ENCODE measurements at regions of chr9 and their contacts with region 1.

Region 1: GRCh38 chr9:111926421-111926875 is 29.8 kb downstream of the UGCG start:
- DNase-seq: peak; percentile 86
- ATAC-seq: peak; percentile 99
- H3K4me3 ChIP-seq: no peak overlapping the region
- H3K4me3 Mint-ChIP-seq: peak overlapping the region; percentile 33
- H3K27ac ChIP-seq: peak overlapping the region; percentile 25 to 72
- H3K27ac Mint-ChIP-seq: peak overlapping the region; percentile 90
- H3K4me1 ChIP-seq: peaks cover 22 to 32% of the 10 kb centered on the region in 2 donors
- H3K4me1 Mint-ChIP-seq: peaks cover 39% of the 10 kb centered on the region
- H3K27me3 ChIP-seq: no peaks in the 10 kb centered on the region
- H3K27me3 Mint-ChIP-seq: no peaks in the 10 kb centered on the region
- CTCF ChIP-seq: no peak

Region 2: GRCh38 chr9:111916234-111916645 is 10.2 kb before region 1 on chr9:
- CTCF ChIA-PET with region 1: interaction called, 9 read pairs
- POLR2A ChIA-PET with region 1: no interaction called
- intact Hi-C with region 1: loop called (anchors 1 kb)
- DNase-seq: peak; percentile 35
- ATAC-seq: peak; percentile 12
- H3K4me3 ChIP-seq: no peak overlapping the region
- H3K4me3 Mint-ChIP-seq: peak overlapping the region; percentile 69
- H3K27ac ChIP-seq: peak overlapping the region; percentile 35 to 79
- H3K27ac Mint-ChIP-seq: peak overlapping the region; percentile 86
- H3K4me1 ChIP-seq: peaks cover 53 to 66% of the 10 kb centered on the region in 2 donors
- H3K4me1 Mint-ChIP-seq: peaks cover 72% of the 10 kb centered on the region
- H3K27me3 ChIP-seq: no peaks in the 10 kb centered on the region
- H3K27me3 Mint-ChIP-seq: no peaks in the 10 kb centered on the region
- CTCF ChIP-seq: no peak

Region 3: DNA sequence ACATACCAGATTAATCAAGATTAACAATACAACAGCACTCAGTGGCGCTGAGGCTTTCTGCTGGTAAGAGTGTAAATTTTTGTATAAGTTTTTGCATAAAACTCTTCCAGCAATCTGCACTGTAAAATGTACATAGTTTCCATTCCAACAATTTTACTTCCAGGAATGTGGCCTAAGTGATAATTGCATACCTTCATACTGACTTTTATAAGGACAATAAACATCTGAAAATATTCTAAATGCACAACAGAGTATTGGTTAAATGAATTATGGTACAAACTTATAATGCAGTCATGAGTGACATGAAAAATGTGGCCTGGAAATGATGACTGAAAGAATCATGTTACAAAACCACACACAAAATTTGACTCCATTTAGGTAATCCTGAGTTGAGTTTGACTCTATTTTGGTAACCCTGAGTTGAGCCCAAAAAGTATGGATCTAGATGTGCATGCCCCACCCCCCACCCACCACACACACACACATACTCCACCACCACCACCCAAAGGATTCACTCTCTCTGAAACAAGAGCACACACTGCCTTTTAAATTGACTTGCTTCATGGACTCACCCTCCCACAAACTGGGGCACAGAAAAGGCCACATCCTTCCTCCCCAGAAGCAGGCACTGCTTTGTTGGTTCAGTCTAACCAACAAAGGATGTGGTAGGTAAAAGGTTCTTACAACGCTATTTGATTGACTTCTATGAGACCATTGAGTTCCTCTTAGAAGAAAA is 111.0 kb after region 1 on chr9:
- CTCF ChIA-PET with region 1: interaction called, 4 read pairs
- POLR2A ChIA-PET with region 1: interaction called, 4 read pairs
- intact Hi-C with region 1: loop called (anchors 2 kb)
- DNase-seq: peak; percentile 84
- ATAC-seq: peak; percentile 68
- H3K4me3 ChIP-seq: peak overlapping the region in 1 of 5 experiments; percentile 18
- H3K4me3 Mint-ChIP-seq: peak overlapping the region; percentile 81
- H3K27ac ChIP-seq: peak overlapping the region; percentile 56 to 72
- H3K27ac Mint-ChIP-seq: peak overlapping the region; percentile 95
- H3K4me1 ChIP-seq: peaks cover 75 to 77% of the 10 kb centered on the region in 2 donors
- H3K4me1 Mint-ChIP-seq: peaks cover 72% of the 10 kb centered on the region
- H3K27me3 ChIP-seq: no peaks in the 10 kb centered on the region
- H3K27me3 Mint-ChIP-seq: no peaks in the 10 kb centered on the region
- CTCF ChIP-seq: no peak

Region 4: GRCh38 chr9:112180387-112180881 is 254.0 kb after region 1 on chr9:
- CTCF ChIA-PET with region 1: no interaction called
- POLR2A ChIA-PET with region 1: interaction called, 15 read pairs
- intact Hi-C with region 1: no loop called
- DNase-seq: peak; percentile 16
- ATAC-seq: no peak
- H3K4me3 ChIP-seq: no peak overlapping the region
- H3K4me3 Mint-ChIP-seq: no peak overlapping the region
- H3K27ac ChIP-seq: no peak overlapping the region
- H3K27ac Mint-ChIP-seq: peak overlapping the region; percentile 32
- H3K4me1 ChIP-seq: peaks cover 14 to 19% of the 10 kb centered on the region in 2 donors
- H3K4me1 Mint-ChIP-seq: peaks cover 25% of the 10 kb centered on the region
- H3K27me3 ChIP-seq: no peaks in the 10 kb centered on the region
- H3K27me3 Mint-ChIP-seq: no peaks in the 10 kb centered on the region
- CTCF ChIP-seq: no peak